Activated naive CD4-positive, alpha-beta T cell treated with anti-CD3 and anti-CD28 coated beads for 36 hours (primary cell): ENCODE measurements at regions of chr1 and their contacts with region 1.

Region 1: DNA sequence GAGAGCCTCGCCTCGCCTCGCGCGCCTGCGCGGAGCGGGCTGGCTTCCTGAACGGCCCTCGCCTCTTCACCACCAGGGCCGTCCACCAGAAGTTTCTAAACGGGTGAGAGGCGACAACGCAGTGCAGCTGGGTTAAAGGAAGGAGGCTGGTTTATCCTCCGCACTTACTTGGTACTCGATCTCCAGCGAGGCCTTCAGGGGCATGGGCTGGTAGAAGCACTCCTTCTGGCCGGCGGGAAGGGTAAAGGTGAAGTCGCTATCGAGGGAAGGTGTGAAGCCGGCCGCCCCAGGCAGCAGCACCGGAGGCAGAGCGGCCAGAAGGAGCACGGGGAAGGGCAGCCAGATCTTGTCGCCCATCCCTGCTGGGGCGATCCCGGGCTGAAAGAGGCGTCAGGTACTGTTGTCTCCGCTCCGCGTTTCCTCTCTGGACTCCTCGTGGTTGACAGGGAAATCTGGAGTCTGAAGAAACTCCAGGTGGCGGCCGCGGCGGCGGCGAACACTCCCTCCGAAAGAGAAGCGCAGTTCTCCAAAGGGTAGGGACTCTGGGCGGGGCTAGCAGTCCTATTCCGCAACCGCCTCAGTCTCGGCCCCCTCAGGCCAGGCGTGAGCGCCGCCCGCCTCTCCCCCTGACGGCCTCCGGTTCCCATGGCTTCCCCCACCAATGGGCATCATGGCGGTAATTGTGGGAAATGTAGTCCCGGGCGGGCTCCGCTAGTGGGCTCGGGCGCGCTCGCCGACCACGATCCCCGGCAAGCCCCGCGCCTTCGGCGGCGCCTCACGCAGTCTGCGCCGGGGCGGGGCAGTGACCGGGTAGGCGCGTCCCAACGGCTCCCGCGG is at the start of gene TMED5:
- DNase-seq: peak; percentile 98
- H3K4me3 Mint-ChIP-seq: peak within 1 kb of the TSS; percentile 88
- H3K27ac Mint-ChIP-seq: peak within 1 kb of the TSS; percentile 99
- H3K4me1 Mint-ChIP-seq: peaks cover 49% of the 10 kb centered on the region
- H3K27me3 Mint-ChIP-seq: no peaks in the 10 kb centered on the region
- total RNA-seq, gene TMED5: 27.8 to 28.2 TPM

Region 2: GRCh38 chr1:92754000-92754718 is 425.9 kb before region 1 on chr1:
- CTCF ChIA-PET with region 1: no interaction called
- intact Hi-C with region 1: no loop called
- DNase-seq: no peak
- H3K4me3 Mint-ChIP-seq: no peak overlapping the region
- H3K27ac Mint-ChIP-seq: no peak overlapping the region
- H3K4me1 Mint-ChIP-seq: no peaks in the 10 kb centered on the region
- H3K27me3 Mint-ChIP-seq: no peaks in the 10 kb centered on the region

Region 3: DNA sequence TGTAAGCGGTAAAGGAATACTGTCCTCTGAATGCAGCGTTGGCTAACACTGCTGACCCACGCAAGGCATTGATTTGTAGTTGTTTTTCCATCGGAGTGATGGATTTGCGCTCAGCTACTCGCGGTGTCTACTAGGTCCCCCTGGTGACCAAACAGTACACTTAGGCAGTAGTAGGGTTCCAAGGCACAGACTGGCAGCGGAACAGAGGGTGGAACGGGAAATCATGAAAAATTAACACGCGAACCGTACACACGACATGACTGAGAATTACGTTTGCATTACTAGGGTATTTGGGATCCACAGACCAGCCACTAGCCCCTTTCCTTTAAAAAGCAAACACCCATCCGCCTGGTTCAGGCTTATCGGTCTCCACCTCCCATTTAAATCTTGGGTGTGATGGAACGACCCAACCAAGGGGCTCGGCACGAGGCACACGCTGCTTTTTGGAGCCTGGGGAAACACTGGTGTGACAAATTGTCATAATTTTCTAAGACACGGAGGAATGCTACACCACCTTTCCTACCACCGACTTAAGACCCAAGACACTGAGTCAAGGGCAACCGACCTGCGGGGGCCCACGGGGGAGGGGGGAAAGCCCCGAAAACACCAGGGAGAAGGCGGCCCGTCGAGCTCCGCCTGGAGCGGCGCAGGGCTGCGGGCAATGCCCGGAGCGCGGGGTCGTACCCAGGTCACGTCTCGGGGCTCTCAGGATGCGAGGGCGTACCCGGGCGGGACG is 219.5 kb before region 1 on chr1:
- CTCF ChIA-PET with region 1: interaction called, 3 read pairs
- intact Hi-C with region 1: loop called (anchors 1 kb)
- DNase-seq: peak; percentile 76
- H3K4me3 Mint-ChIP-seq: peak overlapping the region; percentile 89
- H3K27ac Mint-ChIP-seq: peak overlapping the region; percentile 94
- H3K4me1 Mint-ChIP-seq: peaks cover 41% of the 10 kb centered on the region
- H3K27me3 Mint-ChIP-seq: no peaks in the 10 kb centered on the region

Region 4: DNA sequence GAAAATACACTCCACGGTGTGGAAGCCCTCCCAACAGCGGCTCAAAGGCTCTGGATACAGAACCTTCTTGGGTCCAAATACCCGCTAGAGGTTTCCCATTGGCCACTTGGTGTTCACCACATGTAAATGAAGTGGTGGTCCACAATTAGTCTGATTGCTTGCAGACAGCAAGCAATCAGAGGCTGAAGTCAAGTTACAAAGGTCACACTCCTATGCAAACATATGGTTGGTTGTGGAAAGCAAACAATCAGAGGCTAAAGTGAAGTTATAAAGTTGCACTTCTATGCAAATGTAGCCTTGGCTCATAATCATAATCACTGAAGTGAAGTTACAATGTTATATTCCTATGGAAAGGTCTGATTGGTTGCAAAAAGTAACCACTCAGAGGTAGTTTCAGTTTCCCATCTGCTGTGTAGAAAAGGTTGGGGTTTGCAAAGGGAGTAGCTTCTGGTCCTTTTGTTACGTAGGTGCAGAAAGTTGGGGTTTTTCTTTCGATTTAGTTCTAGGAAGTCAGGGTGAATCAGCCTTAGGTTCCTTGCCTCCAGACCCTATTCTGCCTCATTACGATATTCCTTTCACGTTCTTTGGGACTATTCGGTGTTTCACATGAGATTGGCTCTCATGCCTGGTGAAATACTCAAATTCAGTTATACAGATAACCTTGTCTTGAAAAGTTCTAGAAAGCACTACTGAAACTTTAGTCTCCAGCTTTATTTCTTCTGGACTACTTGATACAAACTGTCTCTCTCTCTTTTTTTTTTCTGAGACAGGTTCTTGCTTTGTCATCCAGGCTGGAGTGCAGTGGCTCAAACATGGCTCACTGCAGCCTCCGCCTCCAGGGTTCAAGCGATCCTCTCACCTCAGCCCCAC is 137.7 kb before region 1 on chr1:
- CTCF ChIA-PET with region 1: interaction called, 3 read pairs
- intact Hi-C with region 1: loop called (anchors 1 kb)
- DNase-seq: peak; percentile 38
- H3K4me3 Mint-ChIP-seq: peak overlapping the region; percentile 64
- H3K27ac Mint-ChIP-seq: peak overlapping the region; percentile 85
- H3K4me1 Mint-ChIP-seq: peaks cover 26% of the 10 kb centered on the region
- H3K27me3 Mint-ChIP-seq: no peaks in the 10 kb centered on the region

Region 5: GRCh38 chr1:93219443-93219842 is 39.3 kb after region 1 on chr1:
- CTCF ChIA-PET with region 1: no interaction called
- intact Hi-C with region 1: loop called (anchors 1 kb)
- DNase-seq: peak; percentile 40
- H3K4me3 Mint-ChIP-seq: peak overlapping the region; percentile 51
- H3K27ac Mint-ChIP-seq: peak overlapping the region; percentile 54
- H3K4me1 Mint-ChIP-seq: peaks cover 21% of the 10 kb centered on the region
- H3K27me3 Mint-ChIP-seq: no peaks in the 10 kb centered on the region

Region 6: DNA sequence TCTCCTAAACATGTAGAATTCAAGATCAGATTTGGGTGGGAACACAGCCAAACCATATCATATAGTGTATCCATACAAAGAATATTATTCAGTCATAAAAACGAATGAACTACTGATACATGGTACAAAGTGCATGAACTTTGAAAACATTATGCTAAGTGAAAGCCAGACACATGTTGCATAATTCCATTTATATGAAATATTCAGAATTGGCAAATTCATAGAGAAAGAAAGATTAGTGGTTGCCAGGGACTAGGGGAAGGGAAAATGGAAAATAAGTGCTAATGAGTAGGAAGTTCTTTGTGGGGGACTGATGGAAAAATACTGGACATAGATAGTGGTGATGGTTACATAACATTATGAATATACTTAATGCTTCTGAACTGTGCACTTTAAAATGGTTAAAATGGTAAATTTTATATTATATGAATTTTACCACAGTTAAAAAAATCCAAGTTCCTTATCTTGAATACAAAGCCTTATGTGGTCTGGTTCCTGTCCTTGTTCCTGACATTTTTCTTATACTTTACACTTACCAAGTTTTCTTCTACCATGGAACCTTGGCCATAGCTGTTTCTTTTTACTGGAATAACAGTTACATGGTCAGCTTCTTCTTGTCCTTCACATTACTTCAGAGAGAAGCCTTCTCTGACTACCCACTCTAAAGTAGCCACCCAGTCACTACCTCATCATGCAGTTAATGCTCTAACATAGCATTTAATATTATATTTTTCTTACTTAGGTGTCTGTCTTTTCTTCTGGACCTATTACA is 64.4 kb after region 1 on chr1:
- CTCF ChIA-PET with region 1: no interaction called
- intact Hi-C with region 1: no loop called
- DNase-seq: no peak
- H3K4me3 Mint-ChIP-seq: no peak overlapping the region
- H3K27ac Mint-ChIP-seq: no peak overlapping the region
- H3K4me1 Mint-ChIP-seq: no peaks in the 10 kb centered on the region
- H3K27me3 Mint-ChIP-seq: no peaks in the 10 kb centered on the region

Region 7: DNA sequence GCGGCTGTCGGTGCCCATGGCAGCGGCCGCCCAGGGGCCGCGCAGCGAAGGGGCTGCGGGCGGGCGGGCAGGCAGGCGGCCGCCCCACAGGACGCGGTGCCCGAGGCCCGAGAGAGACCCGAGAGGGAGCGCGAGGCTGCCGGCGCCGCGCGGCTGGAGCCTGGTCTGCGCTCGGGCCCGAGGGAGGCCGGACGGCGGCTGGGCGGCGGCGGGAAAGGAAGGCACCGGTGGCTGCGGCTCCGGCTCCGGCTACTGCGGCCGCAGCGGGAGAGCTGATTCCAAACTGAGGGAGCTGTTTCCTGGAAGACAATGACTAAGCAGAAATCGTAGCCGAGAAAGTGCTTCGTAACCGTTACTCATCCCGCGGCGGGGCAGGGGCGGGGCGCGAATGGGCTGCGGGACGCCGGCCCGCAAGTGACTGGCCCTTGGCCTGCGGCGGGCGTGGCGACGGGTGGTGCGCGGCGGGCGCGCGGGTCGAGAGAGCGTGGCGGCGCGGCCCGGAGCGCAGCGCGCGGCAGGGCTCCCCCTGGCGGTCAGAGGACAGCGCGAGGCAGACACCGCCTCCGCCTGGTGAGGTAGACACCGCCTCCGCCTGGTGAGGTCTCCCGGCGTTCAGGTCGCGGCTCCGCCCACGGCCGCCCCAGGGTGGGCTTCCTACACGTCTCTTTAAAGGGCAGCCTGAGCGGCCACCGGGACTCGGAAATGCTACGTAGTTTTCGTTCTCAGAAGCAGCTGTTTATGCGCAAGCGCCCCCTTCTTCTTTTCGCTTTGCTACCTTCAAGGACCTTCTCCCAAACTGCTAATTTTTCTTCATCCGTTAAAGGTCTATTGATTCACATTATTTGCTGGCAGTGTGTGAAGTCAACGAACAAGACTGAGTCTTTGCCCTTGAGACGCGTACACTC is 729.3 kb after region 1 on chr1 and contains the start of gene GCLM:
- CTCF ChIA-PET with region 1: no interaction called
- intact Hi-C with region 1: loop called (anchors 1 kb)
- DNase-seq: peak; percentile 88
- H3K4me3 Mint-ChIP-seq: peak within 1 kb of the TSS; percentile 82
- H3K27ac Mint-ChIP-seq: peak within 1 kb of the TSS; percentile 87
- H3K4me1 Mint-ChIP-seq: peaks cover 27% of the 10 kb centered on the region
- H3K27me3 Mint-ChIP-seq: no peaks in the 10 kb centered on the region
- total RNA-seq, gene GCLM: 19.5 to 22.7 TPM